ENCODE measurements at regions of chr16 and their contacts with region 1.

Region 1: DNA sequence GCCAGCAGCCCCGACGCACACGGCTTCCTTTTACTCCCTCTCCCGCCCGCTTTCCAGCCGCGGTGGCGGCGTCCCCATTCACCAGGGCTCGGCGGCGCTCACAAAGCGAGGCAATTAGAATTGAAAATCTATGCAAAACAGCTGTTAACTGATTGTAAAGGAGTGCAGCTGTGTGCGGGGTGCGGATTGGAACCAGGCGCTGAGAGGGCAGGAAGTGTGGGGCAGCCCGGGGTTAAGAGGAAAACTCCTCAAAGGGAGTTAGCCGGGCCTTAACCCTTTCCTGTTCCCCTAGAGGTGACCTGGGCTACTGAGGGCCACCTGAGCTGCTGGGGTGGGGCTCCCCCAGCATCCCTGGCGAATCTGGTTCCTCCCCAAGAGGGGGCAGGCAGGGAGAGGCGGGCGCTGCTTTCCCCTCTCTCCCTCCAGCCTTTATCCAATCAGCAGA is 5.8 kb upstream of the GSE1 start:
- DNase-seq: no peak
- CTCF ChIP-seq: no peak

Region 2: DNA sequence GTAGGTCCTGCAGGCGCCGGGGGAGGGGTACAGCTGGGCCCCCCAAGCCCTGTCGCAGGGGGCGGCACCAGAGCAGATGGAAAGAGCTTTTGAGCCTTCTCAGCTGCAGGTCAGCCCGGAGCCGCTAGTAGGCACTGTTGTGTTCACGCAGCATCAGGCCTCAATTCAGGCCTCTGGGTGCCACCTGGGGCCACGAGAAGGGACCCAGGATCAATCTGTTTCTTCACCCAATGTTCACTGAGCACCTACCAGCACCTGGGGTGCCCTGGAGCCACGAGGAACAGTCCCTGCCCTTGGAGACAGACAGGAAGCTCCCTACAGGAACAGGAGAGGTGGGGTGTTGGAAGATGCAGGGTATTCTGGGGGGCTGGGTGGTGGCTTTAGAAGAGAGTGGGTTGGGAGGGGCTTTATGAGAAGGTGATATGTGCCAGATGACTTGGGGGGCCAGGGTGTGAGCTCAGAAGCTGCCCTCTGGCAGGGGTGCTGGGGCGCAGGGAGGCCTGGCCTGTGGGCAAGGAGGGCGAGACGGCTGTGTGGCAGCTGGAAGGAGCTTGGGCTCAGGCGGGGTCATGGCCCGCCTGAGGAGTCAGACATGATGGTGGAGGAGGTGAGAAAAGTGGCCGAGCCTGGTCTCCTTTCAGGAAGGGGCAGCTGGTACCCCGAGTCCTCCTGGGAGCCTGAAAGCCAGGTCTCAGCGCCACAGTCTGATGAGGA is 116.1 kb before region 1 on chr16:
- in situ Hi-C with region 1: loop called (anchors 10 kb)
- DNase-seq: peak; percentile 89
- CTCF ChIP-seq: peak; percentile 91

Region 3: DNA sequence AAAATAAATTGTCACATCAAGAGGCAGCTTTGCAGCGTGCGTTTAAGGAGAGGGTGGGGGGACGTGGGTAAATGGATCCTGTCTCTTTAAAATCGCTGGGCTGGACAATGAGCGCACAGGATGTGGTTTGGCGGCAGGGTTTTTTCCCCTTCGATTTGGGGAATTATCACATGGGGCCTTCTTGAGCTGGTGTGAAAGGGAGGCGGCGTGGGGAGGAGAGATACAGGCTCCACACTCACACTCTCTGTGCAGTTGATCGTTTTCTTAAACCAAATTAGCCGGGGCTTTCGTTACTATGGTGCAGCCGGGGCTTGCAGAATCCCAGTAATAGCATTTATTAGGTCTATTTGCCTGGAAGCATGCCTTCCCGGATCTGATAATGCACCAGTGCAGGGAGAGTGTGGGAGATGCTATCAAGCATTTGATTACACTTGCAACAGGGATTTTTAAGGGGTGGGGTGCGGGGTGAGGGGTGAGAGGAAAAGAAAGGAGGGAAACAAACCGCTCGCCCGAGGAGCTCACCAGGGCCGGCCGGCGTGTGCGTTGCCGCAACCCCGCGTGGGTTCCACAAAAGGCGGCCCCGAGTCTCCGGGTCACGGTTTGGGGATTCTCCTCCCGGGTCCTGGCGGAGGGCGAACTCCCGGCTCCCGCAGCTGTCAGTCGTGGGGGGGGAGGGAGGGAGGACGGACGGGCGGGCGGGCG is 53.1 kb before region 1 on chr16:
- in situ Hi-C with region 1: loop called (anchors 10 kb)
- DNase-seq: peak; percentile 96
- CTCF ChIP-seq: no peak

Region 4: GRCh38 chr16:85659805-85660495 is 52.6 kb after region 1 on chr16:
- in situ Hi-C with region 1: no loop called
- DNase-seq: peak; percentile 93
- CTCF ChIP-seq: peak; percentile 86

Measured in GM13977 (cell line).